HepG2 (cell line): ENCODE measurements at regions of chr1 and their contacts with region 1.

Region 1: GRCh38 chr1:15206418-15207030 is 40.5 kb upstream of the FHAD1 start:
- DNase-seq: peak; percentile 88
- ATAC-seq: peak; percentile 91
- H3K4me3 ChIP-seq: no peak overlapping the region; a peak in 1 of 6 replicates
- H3K27ac ChIP-seq: peak overlapping the region; percentile 41
- H3K4me1 ChIP-seq: peaks cover 55% of the 10 kb centered on the region
- H3K27me3 ChIP-seq: no peaks in the 10 kb centered on the region
- CTCF ChIP-seq: no peak
- EP300 ChIP-seq: peak in 1 of 2 experiments; percentile 73; a peak in 2 of 4 replicates
- POLR2A ChIP-seq: no peak
- RAD21 ChIP-seq: no peak

Region 2: GRCh38 chr1:14970115-14970798 is 236.3 kb before region 1 on chr1:
- CTCF ChIA-PET with region 1: no interaction called
- POLR2A ChIA-PET with region 1: no interaction called
- in situ Hi-C with region 1: no loop called
- intact Hi-C with region 1: no loop called
- DNase-seq: peak; percentile 72
- ATAC-seq: peak; percentile 50; the same call in 2 of the 3 replicates
- H3K4me3 ChIP-seq: no peak overlapping the region
- H3K27ac ChIP-seq: peak overlapping the region; percentile 14
- H3K4me1 ChIP-seq: peaks cover 21% of the 10 kb centered on the region; the same call in 1 of the 2 replicates
- H3K27me3 ChIP-seq: no peaks in the 10 kb centered on the region
- CTCF ChIP-seq: no peak
- EP300 ChIP-seq: no peak
- POLR2A ChIP-seq: no peak
- RAD21 ChIP-seq: no peak

Region 3: GRCh38 chr1:15128520-15129313 is 77.8 kb before region 1 on chr1:
- CTCF ChIA-PET with region 1: interaction called, 3 read pairs
- POLR2A ChIA-PET with region 1: no interaction called
- in situ Hi-C with region 1: no loop called
- intact Hi-C with region 1: loop called (anchors 2 kb)
- DNase-seq: peak; percentile 59
- ATAC-seq: peak; percentile 99
- H3K4me3 ChIP-seq: no peak overlapping the region
- H3K27ac ChIP-seq: no peak overlapping the region
- H3K4me1 ChIP-seq: no peaks in the 10 kb centered on the region
- H3K27me3 ChIP-seq: no peaks in the 10 kb centered on the region
- CTCF ChIP-seq: peak; percentile 95
- EP300 ChIP-seq: no peak
- POLR2A ChIP-seq: no peak
- RAD21 ChIP-seq: peak; percentile 95

Region 4: DNA sequence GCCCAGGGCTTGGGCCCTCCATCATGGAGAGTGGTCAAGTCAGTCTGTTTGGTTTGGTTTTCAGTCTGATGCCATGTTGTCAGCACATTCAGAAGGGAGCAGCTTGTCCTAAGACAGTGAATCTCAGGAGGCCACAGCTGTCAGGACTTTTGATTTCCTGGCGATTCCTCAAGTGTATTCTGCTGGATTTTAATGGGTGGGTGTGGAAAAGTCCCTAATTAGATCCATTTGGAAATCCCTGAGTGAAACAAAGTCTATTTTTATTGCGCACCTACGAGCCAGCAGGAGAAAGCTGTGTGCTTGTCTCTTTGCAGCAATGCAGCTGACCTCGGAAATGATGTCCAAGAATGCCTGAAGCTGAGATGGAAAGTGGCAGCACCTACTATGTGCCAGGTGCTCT is 18.9 kb after region 1 on chr1:
- CTCF ChIA-PET with region 1: no interaction called
- POLR2A ChIA-PET with region 1: no interaction called
- in situ Hi-C with region 1: no loop called
- intact Hi-C with region 1: no loop called
- DNase-seq: no peak
- ATAC-seq: no peak
- H3K4me3 ChIP-seq: no peak overlapping the region
- H3K27ac ChIP-seq: no peak overlapping the region
- H3K4me1 ChIP-seq: peaks cover 13% of the 10 kb centered on the region
- H3K27me3 ChIP-seq: no peaks in the 10 kb centered on the region
- CTCF ChIP-seq: no peak
- EP300 ChIP-seq: no peak
- POLR2A ChIP-seq: no peak
- RAD21 ChIP-seq: no peak

Region 5: DNA sequence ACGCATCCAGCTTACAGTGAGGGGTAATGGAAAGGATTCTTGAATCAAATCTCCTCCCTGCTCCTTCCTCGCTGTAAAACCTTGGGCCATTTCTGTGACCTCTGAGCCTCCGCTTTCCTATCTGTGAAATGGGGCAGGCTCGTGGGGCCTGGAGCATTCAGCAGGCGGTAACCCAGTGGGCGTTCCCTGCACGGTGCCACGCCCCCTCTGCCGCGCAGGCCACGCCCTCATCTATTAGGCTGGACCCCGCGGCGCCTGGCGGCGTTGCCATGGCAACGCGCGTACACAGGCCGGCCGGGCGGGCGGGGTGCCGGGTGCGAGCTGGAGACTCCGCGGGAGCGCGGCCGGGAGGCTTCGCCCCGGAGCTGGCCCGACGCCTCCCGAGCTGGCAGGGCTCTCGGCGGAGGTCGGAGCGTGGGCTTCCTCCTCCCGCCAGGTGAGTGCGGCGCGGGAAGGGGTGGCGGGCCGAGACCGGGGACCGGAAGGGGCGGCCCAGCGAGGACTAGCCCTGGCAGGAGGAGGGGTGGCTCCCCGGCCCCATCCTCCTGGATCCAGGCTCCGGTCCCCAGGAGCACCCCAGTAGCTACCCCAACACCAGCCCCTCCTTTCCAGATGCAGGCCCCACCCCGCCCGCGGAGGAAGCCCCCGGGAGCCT is 40.6 kb after region 1 on chr1 and contains the start of gene FHAD1:
- CTCF ChIA-PET with region 1: no interaction called
- POLR2A ChIA-PET with region 1: no interaction called
- in situ Hi-C with region 1: no loop called
- intact Hi-C with region 1: no loop called
- DNase-seq: no peak
- ATAC-seq: peak; percentile 63
- H3K4me3 ChIP-seq: peak within 1 kb of the TSS in 2 of 3 experiments; percentile 21 to 29; a peak in 3 of 6 replicates
- H3K27ac ChIP-seq: no peak within 1 kb of the TSS
- H3K4me1 ChIP-seq: peaks cover 14% of the 10 kb centered on the region
- H3K27me3 ChIP-seq: peaks cover 3 to 59% of the 10 kb centered on the region in 2 experiments; a peak in 4 of 5 replicates
- CTCF ChIP-seq: no peak
- EP300 ChIP-seq: no peak
- POLR2A ChIP-seq: no peak
- RAD21 ChIP-seq: no peak
- total RNA-seq, gene FHAD1: not detected in 2 replicates

Region 6: DNA sequence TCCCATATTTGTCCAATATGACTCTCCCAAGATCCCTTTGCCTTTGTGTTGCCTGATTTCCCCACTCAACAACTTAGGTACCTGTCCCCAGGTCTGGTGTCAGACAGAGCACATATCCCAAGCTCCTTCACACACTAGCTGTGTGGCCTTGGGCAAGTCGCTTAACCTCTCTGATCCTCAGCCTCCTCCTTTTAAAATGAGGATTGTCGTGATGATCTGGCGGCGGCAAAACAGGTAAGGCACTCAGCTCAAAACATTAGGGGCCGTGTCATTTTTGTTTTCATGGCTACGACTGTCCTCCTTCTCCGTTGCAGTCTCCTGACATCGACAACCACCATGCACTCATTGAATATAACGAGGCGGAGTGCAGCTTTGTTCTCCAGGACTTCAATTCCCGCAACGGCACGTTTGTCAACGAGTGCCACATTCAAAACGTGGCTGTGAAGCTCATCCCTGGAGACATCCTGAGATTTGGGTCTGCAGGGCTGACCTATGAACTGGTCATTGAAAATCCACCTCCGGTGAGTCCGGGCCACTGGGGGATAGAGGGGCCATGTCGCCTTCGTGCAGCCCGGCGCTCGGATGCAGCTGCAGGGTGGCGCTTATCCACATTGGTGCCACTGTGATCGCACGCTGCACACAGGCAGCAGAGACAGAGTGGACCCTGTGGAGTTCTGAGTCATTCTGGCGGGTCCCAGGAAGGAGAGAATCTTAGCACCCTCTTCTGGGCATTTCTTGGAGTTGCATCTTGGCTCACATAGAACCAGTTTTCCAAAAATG is 65.7 kb after region 1 on chr1:
- CTCF ChIA-PET with region 1: no interaction called
- POLR2A ChIA-PET with region 1: no interaction called
- in situ Hi-C with region 1: no loop called
- intact Hi-C with region 1: loop called (anchors 2 kb)
- DNase-seq: peak; percentile 82
- ATAC-seq: peak; percentile 98
- H3K4me3 ChIP-seq: peak overlapping the region in 1 of 3 experiments; percentile 38; a peak in 2 of 6 replicates
- H3K27ac ChIP-seq: no peak overlapping the region
- H3K4me1 ChIP-seq: peaks cover 21% of the 10 kb centered on the region
- H3K27me3 ChIP-seq: peaks cover 2 to 10% of the 10 kb centered on the region in 2 experiments; a peak in 2 of 5 replicates
- CTCF ChIP-seq: peak; percentile 94
- EP300 ChIP-seq: no peak
- POLR2A ChIP-seq: no peak
- RAD21 ChIP-seq: peak; percentile 92

Region 7: GRCh38 chr1:15304701-15305467 is 98.4 kb after region 1 on chr1:
- CTCF ChIA-PET with region 1: no interaction called
- POLR2A ChIA-PET with region 1: no interaction called
- in situ Hi-C with region 1: loop called (anchors 5 kb)
- intact Hi-C with region 1: loop called (anchors 2 kb)
- DNase-seq: peak; percentile 55
- ATAC-seq: peak; percentile 87
- H3K4me3 ChIP-seq: no peak overlapping the region
- H3K27ac ChIP-seq: no peak overlapping the region
- H3K4me1 ChIP-seq: peaks cover 19% of the 10 kb centered on the region
- H3K27me3 ChIP-seq: peaks cover 1 to 7% of the 10 kb centered on the region in 2 experiments; a peak in 3 of 5 replicates
- CTCF ChIP-seq: peak; percentile 94
- EP300 ChIP-seq: no peak
- POLR2A ChIP-seq: no peak
- RAD21 ChIP-seq: peak; percentile 89

Region 8: DNA sequence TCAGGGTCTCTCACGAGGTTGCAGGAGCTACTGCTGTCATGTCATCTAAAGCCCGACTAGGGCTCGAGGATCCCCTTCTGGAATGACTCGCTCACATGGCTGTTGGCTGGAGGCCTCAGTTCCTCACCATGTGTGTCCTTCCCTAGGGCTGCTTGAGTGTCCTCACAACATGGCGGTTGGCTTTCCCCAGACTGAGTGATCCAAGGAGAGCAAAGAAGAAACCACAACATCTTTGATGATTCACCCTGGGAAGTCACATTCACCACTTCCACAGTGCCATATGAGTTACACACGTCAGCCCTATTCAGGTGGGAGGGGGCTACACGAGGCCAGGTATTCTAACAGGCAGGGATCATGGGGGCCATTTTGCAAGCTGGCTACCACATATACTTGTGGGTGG is 105.4 kb after region 1 on chr1:
- CTCF ChIA-PET with region 1: no interaction called
- POLR2A ChIA-PET with region 1: interaction called, 3 read pairs
- in situ Hi-C with region 1: loop called (anchors 5 kb)
- intact Hi-C with region 1: no loop called
- DNase-seq: no peak
- ATAC-seq: no peak
- H3K4me3 ChIP-seq: no peak overlapping the region
- H3K27ac ChIP-seq: no peak overlapping the region
- H3K4me1 ChIP-seq: peaks cover 25% of the 10 kb centered on the region
- H3K27me3 ChIP-seq: peaks cover 3 to 17% of the 10 kb centered on the region in 2 experiments; a peak in 3 of 5 replicates
- CTCF ChIP-seq: no peak
- EP300 ChIP-seq: no peak
- POLR2A ChIP-seq: no peak
- RAD21 ChIP-seq: no peak

Region 9: DNA sequence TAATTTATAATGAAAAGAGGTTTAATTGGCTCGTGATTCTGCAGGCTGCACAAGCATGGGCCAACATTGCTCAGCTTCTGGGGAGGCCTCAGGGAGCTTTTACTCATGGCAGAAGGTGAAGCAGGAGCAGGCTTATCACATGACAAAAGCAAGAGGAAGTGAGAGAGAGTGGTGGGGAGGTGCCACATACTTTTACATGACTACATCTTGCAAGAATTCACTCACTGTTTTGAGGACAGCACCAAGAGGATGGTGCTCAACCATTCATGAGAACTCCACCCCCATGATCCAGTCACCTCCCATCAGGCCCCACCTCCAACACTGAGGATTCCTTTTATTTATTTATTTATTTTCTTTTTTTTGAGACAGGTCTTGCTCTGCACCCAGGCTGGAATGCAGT is 472.1 kb after region 1 on chr1:
- CTCF ChIA-PET with region 1: no interaction called
- POLR2A ChIA-PET with region 1: no interaction called
- in situ Hi-C with region 1: no loop called
- intact Hi-C with region 1: no loop called
- DNase-seq: peak; percentile 62
- ATAC-seq: no peak
- H3K4me3 ChIP-seq: no peak overlapping the region
- H3K27ac ChIP-seq: no peak overlapping the region
- H3K4me1 ChIP-seq: peaks cover 34% of the 10 kb centered on the region
- H3K27me3 ChIP-seq: no peaks in the 10 kb centered on the region
- CTCF ChIP-seq: no peak
- EP300 ChIP-seq: no peak
- POLR2A ChIP-seq: no peak
- RAD21 ChIP-seq: no peak